Kidney (tissue), 22 donors: ENCODE measurements at regions of chr16 and their contacts with region 1.

Region 1: GRCh38 chr16:72234387-72234786 is 62.4 kb upstream of the PMFBP1 start:
- DNase-seq: no peak
- H3K4me3 ChIP-seq: no peak overlapping the region
- H3K27ac ChIP-seq: no peak overlapping the region
- H3K4me1 ChIP-seq: no peaks in the 10 kb centered on the region
- H3K27me3 ChIP-seq: no peaks in the 10 kb centered on the region
- CTCF ChIP-seq: no peak

Region 2: GRCh38 chr16:72162105-72162692 is 72.2 kb before region 1 on chr16:
- intact Hi-C with region 1: no loop called
- DNase-seq: no peak
- H3K4me3 ChIP-seq: no peak overlapping the region
- H3K27ac ChIP-seq: no peak overlapping the region
- H3K4me1 ChIP-seq: no peaks in the 10 kb centered on the region
- H3K27me3 ChIP-seq: no peaks in the 10 kb centered on the region
- CTCF ChIP-seq: no peak

Region 3: DNA sequence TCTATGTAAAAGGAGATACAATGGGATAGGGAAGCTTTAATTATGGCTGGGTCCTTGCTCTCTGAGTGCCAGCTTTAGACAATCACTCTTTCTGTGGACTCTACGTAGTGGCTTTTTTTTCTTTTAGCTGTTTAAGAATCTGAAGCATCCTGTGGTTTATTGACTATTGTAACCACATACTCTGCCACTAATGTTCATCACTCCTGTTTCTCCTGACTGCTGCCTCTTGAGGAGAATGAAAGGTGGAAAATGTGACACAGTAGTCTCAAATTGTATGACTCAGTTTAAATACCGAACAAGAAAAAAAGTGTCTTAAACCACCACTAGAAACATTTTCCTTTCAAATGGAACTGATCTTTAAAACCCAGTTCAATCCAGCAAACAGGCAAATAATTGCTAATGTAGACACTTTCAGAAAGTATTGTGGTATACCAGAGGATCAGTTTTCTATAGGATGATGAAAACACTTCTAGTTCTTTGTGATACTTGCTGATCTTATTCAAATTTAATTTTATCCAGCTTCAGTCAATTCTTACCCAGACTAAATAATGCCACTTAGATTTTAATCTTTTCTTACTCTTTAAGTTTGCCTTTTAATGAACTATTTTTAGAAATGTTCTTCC is 240.2 kb after region 1 on chr16:
- intact Hi-C with region 1: loop called (anchors 10 kb)
- DNase-seq: no peak
- H3K4me3 ChIP-seq: no peak overlapping the region
- H3K27ac ChIP-seq: no peak overlapping the region
- H3K4me1 ChIP-seq: no peaks in the 10 kb centered on the region
- H3K27me3 ChIP-seq: no peaks in the 10 kb centered on the region
- CTCF ChIP-seq: no peak